ENCODE measurements at regions of chr1 and their contacts with region 1.

Region 1: GRCh38 chr1:52707927-52708601 is 9.9 kb upstream of the COA7 start:
- DNase-seq: peak; percentile 80
- H3K4me3 ChIP-seq: peak overlapping the region in 1 of 8 donors; percentile 37
- H3K27ac ChIP-seq: peak overlapping the region in 4 of 8 donors; percentile 8 to 59 (median 58)
- H3K4me1 ChIP-seq: peaks cover 0 to 34% (median 9%) of the 10 kb centered on the region in 6 donors
- H3K27me3 ChIP-seq: no peaks in the 10 kb centered on the region
- CTCF ChIP-seq: no peak
- POLR2A ChIP-seq: no peak

Region 2: GRCh38 chr1:52919051-52919722 is 211.1 kb after region 1 on chr1:
- intact Hi-C with region 1: loop called (anchors 5 kb)
- DNase-seq: no peak
- H3K4me3 ChIP-seq: no peak overlapping the region
- H3K27ac ChIP-seq: peak overlapping the region in 2 of 8 donors; percentile 1 to 12
- H3K4me1 ChIP-seq: peaks cover 0 to 46% (median 22%) of the 10 kb centered on the region in 6 donors
- H3K27me3 ChIP-seq: peaks cover 0 to 40% (median 8%) of the 10 kb centered on the region in 7 donors
- CTCF ChIP-seq: no peak
- POLR2A ChIP-seq: no peak